Activated CD4-positive, alpha-beta T cell treated with anti-CD3 and anti-CD28 coated beads, Interleukin-2, amount 10 ng/mL, durations not matched to agents 24 days and 14 days (primary cell): ENCODE measurements at regions of chr7 and their contacts with region 1.

Region 1: DNA sequence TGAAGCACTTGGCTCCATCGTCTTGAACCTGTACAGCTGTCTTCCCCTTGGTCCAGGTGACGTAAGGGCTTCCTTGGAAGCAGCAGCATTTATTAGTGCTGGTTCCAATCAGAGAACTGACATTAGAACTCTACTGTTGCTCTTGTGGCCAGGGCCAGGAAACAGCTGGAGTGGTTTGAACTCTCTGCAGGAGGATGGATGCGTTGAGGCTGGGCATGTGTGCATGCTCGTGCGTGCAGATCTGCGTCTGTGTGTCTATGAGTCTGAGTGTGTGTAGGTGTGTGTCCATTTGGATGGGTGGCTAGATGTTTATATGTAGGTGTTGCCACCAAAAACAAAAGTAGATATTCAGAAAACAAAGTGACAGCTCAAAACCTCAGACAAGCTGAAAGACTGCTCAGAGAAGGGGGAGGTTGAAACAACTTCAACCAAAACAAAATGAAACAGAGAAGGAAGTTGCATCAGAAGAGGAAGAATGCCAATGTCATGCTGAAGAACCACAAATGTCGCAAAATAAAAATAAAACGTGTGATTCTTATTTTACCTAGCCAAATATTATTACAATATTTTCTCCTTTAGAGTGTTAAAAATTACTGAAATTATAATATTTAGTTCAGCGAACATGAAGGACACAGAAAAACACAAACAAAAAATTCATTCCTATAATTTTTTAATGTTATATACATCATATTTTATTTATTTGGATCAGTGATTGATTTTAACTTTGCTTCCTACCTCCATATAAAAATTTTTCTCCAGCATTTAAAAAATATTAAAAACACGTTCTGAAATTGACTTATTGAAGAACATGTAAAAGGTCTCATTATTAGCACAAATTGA is 96.1 kb upstream of the MKLN1 start:
- DNase-seq: peak; percentile 90
- H3K4me3 Mint-ChIP-seq: peak overlapping the region; percentile 72
- H3K27ac Mint-ChIP-seq: peak overlapping the region; percentile 87
- H3K4me1 Mint-ChIP-seq: peaks cover 59% of the 10 kb centered on the region
- H3K27me3 Mint-ChIP-seq: peaks cover 1% of the 10 kb centered on the region

Region 2: DNA sequence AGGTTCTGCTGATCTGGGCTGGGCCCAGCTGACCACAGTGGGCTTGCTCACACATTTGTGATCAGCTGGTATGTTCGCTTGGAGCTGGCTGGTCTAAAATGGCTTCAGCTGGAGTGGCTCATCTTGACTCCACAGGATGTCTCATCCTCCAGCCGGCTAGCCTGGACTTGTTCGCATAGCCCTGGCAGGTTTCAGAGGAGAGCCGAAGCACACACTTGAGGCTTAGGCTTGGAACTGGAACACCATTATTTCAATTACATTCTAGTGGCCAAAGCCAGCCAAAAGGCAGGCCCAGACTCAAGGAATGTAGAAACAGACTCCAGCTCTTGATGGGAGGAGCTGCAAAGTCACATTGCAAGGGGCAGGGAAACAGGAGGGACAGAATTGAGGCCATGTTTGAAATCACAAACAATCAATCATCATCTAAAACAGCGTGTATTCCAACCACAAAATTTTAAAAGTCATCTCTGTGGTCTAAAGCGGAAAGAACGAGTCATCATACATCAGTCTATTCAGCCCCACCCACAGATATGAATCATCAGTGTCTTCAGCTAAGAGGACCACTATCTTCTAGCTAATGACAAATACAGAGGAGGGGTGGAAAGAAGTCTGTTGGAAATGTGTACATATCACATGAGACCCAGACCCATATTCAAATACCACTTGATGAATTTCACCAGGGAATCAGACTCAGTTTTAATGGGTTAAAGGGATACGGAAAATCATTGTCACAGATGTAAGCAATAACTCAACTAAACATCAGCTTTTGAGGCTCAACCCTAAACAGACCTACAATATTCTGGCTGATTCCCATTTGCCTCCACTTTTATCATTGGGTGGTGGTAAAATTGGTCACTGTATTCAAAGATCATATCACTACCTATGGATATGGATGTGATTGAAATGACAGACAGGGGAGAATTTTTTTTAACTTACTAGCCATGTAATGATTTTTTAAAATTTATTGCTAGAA is 42.9 kb before region 1 on chr7:
- intact Hi-C with region 1: loop called (anchors 1 kb)
- DNase-seq: peak; percentile 89
- H3K4me3 Mint-ChIP-seq: peak overlapping the region; percentile 38
- H3K27ac Mint-ChIP-seq: peak overlapping the region; percentile 90
- H3K4me1 Mint-ChIP-seq: peaks cover 47% of the 10 kb centered on the region
- H3K27me3 Mint-ChIP-seq: no peaks in the 10 kb centered on the region

Region 3: GRCh38 chr7:131219312-131220041 is 12.1 kb before region 1 on chr7:
- intact Hi-C with region 1: loop called (anchors 1 kb)
- DNase-seq: no peak
- H3K4me3 Mint-ChIP-seq: no peak overlapping the region
- H3K27ac Mint-ChIP-seq: no peak overlapping the region
- H3K4me1 Mint-ChIP-seq: peaks cover 10% of the 10 kb centered on the region
- H3K27me3 Mint-ChIP-seq: no peaks in the 10 kb centered on the region

Region 4: GRCh38 chr7:131249003-131249402 is 17.4 kb after region 1 on chr7:
- intact Hi-C with region 1: no loop called
- DNase-seq: no peak
- H3K4me3 Mint-ChIP-seq: no peak overlapping the region
- H3K27ac Mint-ChIP-seq: no peak overlapping the region
- H3K4me1 Mint-ChIP-seq: peaks cover 5% of the 10 kb centered on the region
- H3K27me3 Mint-ChIP-seq: peaks cover 9% of the 10 kb centered on the region

Region 5: GRCh38 chr7:131370523-131370968 is 138.9 kb after region 1 on chr7:
- intact Hi-C with region 1: loop called (anchors 5 kb)
- DNase-seq: peak; percentile 82
- H3K4me3 Mint-ChIP-seq: no peak overlapping the region
- H3K27ac Mint-ChIP-seq: no peak overlapping the region
- H3K4me1 Mint-ChIP-seq: peaks cover 41% of the 10 kb centered on the region
- H3K27me3 Mint-ChIP-seq: no peaks in the 10 kb centered on the region